MCF 10A (cell line): ENCODE measurements at regions of chr1 and their contacts with region 1.

Region 1: DNA sequence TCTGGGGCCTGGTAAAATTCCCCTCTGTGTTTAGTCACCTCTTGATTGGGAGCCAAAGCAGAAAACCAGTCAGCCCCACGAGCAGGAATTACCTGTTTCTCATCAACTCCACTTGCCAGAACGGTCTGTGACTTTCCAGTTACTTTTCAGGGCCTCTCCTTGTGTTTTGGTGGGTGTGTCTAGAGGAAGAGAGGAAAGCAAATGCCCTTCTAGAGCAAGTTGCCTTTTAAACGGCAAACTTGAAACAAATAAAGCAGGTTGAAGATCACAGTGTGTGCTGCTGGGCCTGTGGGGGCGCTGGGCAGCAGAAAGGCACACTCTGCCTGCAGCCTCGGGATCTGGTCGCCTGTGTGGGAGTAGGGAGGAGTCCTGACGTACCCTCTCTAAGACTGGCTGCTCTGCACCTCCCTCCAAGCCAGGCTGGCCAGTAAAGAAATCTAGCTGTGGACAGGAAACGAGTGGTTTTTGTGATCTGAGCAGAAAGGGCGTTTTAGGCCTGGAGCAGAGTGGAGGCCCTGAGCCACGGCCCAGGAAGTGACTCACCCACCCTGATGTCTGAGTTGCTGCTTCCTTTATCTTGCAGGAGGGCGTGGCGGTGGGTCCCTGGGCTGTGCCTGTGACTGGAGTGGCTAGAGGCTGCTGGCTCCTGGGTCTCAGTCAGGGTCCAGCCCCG is 11.1 kb upstream of the S100A11 start:
- DNase-seq: peak; percentile 100
- H3K4me3 Mint-ChIP-seq: peak overlapping the region; percentile 62
- H3K27ac Mint-ChIP-seq: peak overlapping the region; percentile 98
- H3K4me1 Mint-ChIP-seq: peaks cover 55% of the 10 kb centered on the region
- H3K27me3 Mint-ChIP-seq: no peaks in the 10 kb centered on the region
- CTCF ChIP-seq: peak; percentile 58

Region 2: GRCh38 chr1:151711044-151711800 is 336.6 kb before region 1 on chr1:
- CTCF ChIA-PET with region 1: no interaction called
- POLR2A ChIA-PET with region 1: no interaction called
- intact Hi-C with region 1: no loop called
- DNase-seq: no peak
- H3K4me3 Mint-ChIP-seq: no peak overlapping the region
- H3K27ac Mint-ChIP-seq: no peak overlapping the region
- H3K4me1 Mint-ChIP-seq: peaks cover 10% of the 10 kb centered on the region
- H3K27me3 Mint-ChIP-seq: peaks cover 16% of the 10 kb centered on the region
- CTCF ChIP-seq: no peak

Region 3: GRCh38 chr1:151915061-151915686 is 132.7 kb before region 1 on chr1:
- CTCF ChIA-PET with region 1: no interaction called
- POLR2A ChIA-PET with region 1: no interaction called
- intact Hi-C with region 1: no loop called
- DNase-seq: no peak
- H3K4me3 Mint-ChIP-seq: no peak overlapping the region
- H3K27ac Mint-ChIP-seq: no peak overlapping the region
- H3K4me1 Mint-ChIP-seq: peaks cover 7% of the 10 kb centered on the region
- H3K27me3 Mint-ChIP-seq: no peaks in the 10 kb centered on the region
- CTCF ChIP-seq: no peak

Region 4: GRCh38 chr1:151934048-151934493 is 113.8 kb before region 1 on chr1:
- CTCF ChIA-PET with region 1: interaction called, 10 read pairs
- POLR2A ChIA-PET with region 1: interaction called, 4 read pairs
- intact Hi-C with region 1: no loop called
- DNase-seq: peak; percentile 82
- H3K4me3 Mint-ChIP-seq: no peak overlapping the region
- H3K27ac Mint-ChIP-seq: no peak overlapping the region
- H3K4me1 Mint-ChIP-seq: peaks cover 11% of the 10 kb centered on the region
- H3K27me3 Mint-ChIP-seq: no peaks in the 10 kb centered on the region
- CTCF ChIP-seq: peak; percentile 96

Region 5: DNA sequence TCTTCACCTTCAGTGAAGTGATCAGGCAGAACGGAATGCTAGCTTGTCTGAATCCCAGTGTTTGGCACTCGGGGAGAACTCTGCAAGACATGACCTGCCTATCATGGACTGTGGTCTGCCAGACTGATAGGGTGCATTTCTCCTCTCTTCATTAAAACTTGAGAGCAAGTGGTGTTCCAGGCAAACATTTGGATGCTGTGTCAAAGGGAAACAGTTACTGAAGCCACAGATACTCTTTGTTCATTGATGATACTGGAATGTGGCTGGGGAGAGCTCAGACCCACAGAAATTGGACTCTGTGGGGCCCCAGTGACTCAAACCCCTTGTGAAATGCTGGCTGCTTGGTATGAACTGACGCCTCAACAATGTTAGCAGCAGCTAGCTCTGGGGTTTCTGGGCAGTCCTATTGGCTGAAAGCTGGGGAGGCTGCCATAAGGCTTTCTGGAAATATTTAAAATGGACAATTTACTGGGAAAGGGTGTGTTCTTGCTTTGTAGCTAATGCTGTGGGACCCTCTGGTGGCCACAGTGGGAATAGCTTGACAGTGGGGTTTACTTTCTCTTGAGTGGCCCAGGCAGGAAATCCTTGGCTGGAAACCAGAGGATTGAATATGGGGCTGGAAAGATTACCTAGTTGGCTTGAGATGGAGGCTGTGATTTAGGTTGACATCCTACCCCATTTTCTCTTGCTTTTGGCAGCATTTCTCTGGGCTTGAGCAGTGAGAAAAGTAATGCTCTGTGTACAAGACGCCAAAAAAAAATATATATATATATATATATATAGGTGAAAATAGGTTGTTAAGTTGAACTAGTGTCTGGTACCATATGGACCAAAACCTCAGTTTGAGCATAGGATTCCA is 46.2 kb before region 1 on chr1:
- CTCF ChIA-PET with region 1: interaction called, 7 read pairs
- POLR2A ChIA-PET with region 1: interaction called, 64 read pairs
- intact Hi-C with region 1: loop called (anchors 2 kb)
- DNase-seq: peak; percentile 96
- H3K4me3 Mint-ChIP-seq: peak overlapping the region; percentile 28
- H3K27ac Mint-ChIP-seq: peak overlapping the region; percentile 33
- H3K4me1 Mint-ChIP-seq: peaks cover 55% of the 10 kb centered on the region
- H3K27me3 Mint-ChIP-seq: no peaks in the 10 kb centered on the region
- CTCF ChIP-seq: peak; percentile 98

Region 6: DNA sequence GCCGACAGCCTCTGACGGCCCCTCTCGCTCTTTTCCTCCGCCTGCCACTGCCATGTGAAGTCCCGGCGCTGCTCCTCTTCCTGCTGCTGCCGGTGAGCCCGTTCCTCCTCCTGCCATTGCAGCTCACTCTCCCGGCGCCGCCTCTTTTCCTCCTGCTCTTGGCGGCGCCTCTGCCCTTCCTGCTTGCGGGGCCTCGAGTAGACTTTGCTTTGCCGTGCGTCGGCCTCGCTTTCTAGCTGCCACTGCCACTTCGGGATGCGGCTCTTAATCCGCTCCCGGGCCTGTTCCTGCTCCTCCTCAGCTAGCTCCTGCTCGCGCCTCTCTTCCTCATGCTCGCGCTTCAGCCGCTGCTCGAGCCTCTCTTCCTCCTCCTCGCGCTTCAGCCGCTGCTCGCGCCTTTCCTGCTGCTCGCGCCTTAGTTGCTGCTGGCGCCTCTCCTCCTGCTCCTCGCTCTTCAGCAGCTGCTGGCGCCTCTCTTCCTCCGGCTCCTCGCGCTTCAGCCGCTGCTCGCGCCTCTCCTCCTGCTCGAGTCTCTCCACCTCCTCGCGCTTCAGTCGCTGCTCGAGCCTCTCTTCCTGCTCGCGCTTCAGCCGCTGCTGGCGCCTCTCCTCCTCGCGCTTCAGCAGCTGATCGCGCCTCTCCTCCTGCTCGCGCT is 63.1 kb after region 1 on chr1:
- CTCF ChIA-PET with region 1: interaction called, 28 read pairs
- POLR2A ChIA-PET with region 1: interaction called, 45 read pairs
- intact Hi-C with region 1: no loop called
- DNase-seq: peak; percentile 71
- H3K4me3 Mint-ChIP-seq: no peak overlapping the region
- H3K27ac Mint-ChIP-seq: no peak overlapping the region
- H3K4me1 Mint-ChIP-seq: no peaks in the 10 kb centered on the region
- H3K27me3 Mint-ChIP-seq: no peaks in the 10 kb centered on the region
- CTCF ChIP-seq: no peak

Region 7: DNA sequence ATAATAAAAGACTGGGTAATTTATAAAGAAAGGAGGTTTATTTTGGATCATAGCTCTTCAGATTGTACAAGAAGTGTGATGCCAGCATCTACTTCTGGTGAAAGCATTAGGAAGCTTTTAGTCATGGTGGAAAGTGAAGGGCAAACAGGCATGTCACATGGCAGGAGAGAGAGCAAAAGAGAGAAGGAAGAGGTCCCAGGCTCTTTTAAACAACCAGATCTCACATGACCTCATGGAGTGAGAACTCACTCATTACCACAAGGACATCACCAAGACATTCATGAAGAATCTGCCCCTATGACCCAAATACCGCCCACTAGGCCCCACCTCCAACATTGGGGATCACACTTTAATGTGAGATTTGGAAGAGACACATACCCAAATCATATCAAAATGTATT is 101.1 kb after region 1 on chr1:
- CTCF ChIA-PET with region 1: interaction called, 20 read pairs
- POLR2A ChIA-PET with region 1: interaction called, 4 read pairs
- intact Hi-C with region 1: no loop called
- DNase-seq: no peak
- H3K4me3 Mint-ChIP-seq: no peak overlapping the region
- H3K27ac Mint-ChIP-seq: no peak overlapping the region
- H3K4me1 Mint-ChIP-seq: no peaks in the 10 kb centered on the region
- H3K27me3 Mint-ChIP-seq: no peaks in the 10 kb centered on the region
- CTCF ChIP-seq: no peak

Region 8: DNA sequence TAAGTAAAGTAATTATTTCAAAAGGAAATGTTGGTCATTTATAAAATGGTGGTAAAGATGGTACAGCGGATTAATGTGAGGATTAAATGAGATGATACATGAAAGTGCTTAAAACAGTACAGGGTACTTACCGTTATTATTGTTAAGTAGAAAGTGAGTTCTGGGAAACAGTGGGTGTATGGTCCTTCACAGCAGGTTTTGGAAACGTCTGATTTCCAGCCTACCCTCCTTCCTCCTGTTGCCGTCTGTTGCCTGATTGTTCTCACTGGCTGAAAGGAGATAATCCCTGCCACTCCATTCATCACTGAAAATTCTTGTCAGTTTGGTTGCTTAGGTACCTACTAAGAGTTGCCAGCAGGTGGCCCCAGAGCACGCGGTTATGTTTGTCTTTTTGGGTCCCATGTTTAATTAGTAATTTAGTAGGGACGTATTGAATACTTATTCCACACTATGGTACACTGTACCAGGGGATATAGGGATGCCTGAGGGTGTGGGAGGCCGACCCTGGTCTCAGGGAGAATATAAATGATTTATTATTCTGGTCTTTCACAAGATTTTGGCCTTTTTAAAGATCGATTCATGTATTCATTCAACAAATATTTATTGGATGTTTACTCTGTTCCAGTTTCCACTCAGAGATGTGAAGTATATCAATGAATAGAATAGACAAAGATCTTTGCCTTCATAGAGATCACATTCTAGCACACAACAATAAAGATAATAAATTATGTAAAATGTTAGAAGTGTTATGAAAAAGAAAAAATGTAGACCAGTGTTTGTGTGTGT is 142.0 kb after region 1 on chr1:
- CTCF ChIA-PET with region 1: interaction called, 517 read pairs
- POLR2A ChIA-PET with region 1: interaction called, 212 read pairs
- intact Hi-C with region 1: loop called (anchors 1 kb)
- DNase-seq: peak; percentile 90
- H3K4me3 Mint-ChIP-seq: peak overlapping the region; percentile 60
- H3K27ac Mint-ChIP-seq: peak overlapping the region; percentile 1
- H3K4me1 Mint-ChIP-seq: peaks cover 41% of the 10 kb centered on the region
- H3K27me3 Mint-ChIP-seq: peaks cover 11% of the 10 kb centered on the region
- CTCF ChIP-seq: peak; percentile 91

Region 9: GRCh38 chr1:152328801-152329391 is 281.0 kb after region 1 on chr1:
- CTCF ChIA-PET with region 1: no interaction called
- POLR2A ChIA-PET with region 1: no interaction called
- intact Hi-C with region 1: no loop called
- DNase-seq: no peak
- H3K4me3 Mint-ChIP-seq: no peak overlapping the region
- H3K27ac Mint-ChIP-seq: no peak overlapping the region
- H3K4me1 Mint-ChIP-seq: no peaks in the 10 kb centered on the region
- H3K27me3 Mint-ChIP-seq: no peaks in the 10 kb centered on the region
- CTCF ChIP-seq: no peak

Region 10: DNA sequence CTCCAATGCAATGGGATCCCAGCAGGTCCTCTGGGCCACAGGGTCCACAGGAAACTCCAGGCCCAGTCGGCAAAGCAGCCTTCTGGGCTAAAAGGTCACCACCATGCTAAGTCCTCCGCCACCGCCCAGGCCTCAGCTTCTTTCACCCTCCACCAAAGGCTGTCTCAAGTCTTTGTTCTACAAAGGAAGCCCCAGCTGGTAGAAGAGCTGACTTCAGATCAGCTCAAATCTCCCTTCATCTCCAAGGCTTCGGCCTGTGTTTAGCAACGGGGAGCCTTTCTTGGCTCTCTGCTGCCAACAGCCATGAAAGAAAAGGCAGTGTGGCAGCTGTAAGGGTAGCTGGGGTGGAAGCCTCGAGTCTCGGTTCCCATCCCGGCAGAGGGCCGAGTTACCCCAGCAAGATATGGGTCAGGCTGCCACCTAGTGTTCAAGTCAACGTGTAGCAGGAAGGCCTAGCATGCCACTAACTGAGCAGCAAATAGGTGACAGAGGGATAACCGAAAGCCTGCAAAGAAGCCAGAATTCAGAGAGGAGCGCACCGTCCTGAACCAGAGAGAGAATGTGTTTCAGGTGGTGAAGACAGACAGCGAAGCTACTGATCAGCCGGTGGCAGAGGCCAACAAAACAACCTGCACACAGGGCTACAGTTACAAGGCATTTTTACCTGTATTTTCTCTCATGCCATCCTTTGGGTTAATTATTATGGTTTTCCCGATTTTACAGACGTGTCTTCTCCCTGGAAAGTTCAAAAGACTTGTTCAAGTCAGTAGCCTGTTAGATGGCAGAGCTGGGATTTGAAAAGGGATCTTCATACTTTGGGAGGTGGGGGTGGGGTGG is 393.0 kb after region 1 on chr1:
- CTCF ChIA-PET with region 1: interaction called, 12 read pairs
- POLR2A ChIA-PET with region 1: interaction called, 3 read pairs
- intact Hi-C with region 1: loop called (anchors 5 kb)
- DNase-seq: peak; percentile 89
- H3K4me3 Mint-ChIP-seq: no peak overlapping the region
- H3K27ac Mint-ChIP-seq: no peak overlapping the region
- H3K4me1 Mint-ChIP-seq: peaks cover 24% of the 10 kb centered on the region
- H3K27me3 Mint-ChIP-seq: no peaks in the 10 kb centered on the region
- CTCF ChIP-seq: peak; percentile 91